OCI-LY7 (cell line): ENCODE measurements at regions of chr2 and their contacts with region 1.

Region 1: GRCh38 chr2:169141713-169142352 is 72.5 kb downstream of the DHRS9 start:
- DNase-seq: peak; percentile 51
- H3K4me3 ChIP-seq: no peak overlapping the region
- H3K27ac ChIP-seq: no peak overlapping the region
- H3K4me1 ChIP-seq: peaks cover 13% of the 10 kb centered on the region
- CTCF ChIP-seq: peak; percentile 89

Region 2: GRCh38 chr2:169159686-169160085 is 17.9 kb after region 1 on chr2:
- CTCF ChIA-PET with region 1: no interaction called
- POLR2A ChIA-PET with region 1: interaction called, 23 read pairs
- intact Hi-C with region 1: no loop called
- DNase-seq: no peak
- H3K4me3 ChIP-seq: no peak overlapping the region
- H3K27ac ChIP-seq: no peak overlapping the region
- H3K4me1 ChIP-seq: no peaks in the 10 kb centered on the region
- CTCF ChIP-seq: no peak